CD8-positive, alpha-beta memory T cell (primary cell): ENCODE measurements at regions of chr19 and their contacts with region 1.

Region 1: GRCh38 chr19:13150187-13150930 is at the starts of genes IER2 and STX10:
- DNase-seq: peak; percentile 90 to 95 (median 91)
- H3K4me3 ChIP-seq: peak within 1 kb of the TSS; percentile 94
- H3K4me3 Mint-ChIP-seq: peak within 1 kb of the TSS; percentile 94 to 100 (median 99)
- H3K27ac ChIP-seq: peak within 1 kb of the TSS; percentile 91
- H3K27ac Mint-ChIP-seq: peak within 1 kb of the TSS; percentile 95 to 99 (median 98)
- H3K4me1 ChIP-seq: peaks cover 12% of the 10 kb centered on the region
- H3K4me1 Mint-ChIP-seq: peaks cover 26 to 42% (median 32%) of the 10 kb centered on the region in 3 donors
- H3K27me3 ChIP-seq: no peaks in the 10 kb centered on the region
- H3K27me3 Mint-ChIP-seq: peaks cover 0 to 20% of the 10 kb centered on the region in 2 donors
- total RNA-seq, gene IER2: 102 to 111 TPM
- total RNA-seq, gene STX10: 60.9 to 63.7 TPM

Region 2: GRCh38 chr19:13104360-13104847 is 46.0 kb before region 1 on chr19:
- CTCF ChIA-PET with region 1: interaction called, 5 read pairs
- POLR2A ChIA-PET with region 1: interaction called, 12 read pairs
- DNase-seq: peak; percentile 49 to 70 (median 58)
- H3K4me3 ChIP-seq: peak overlapping the region; percentile 81
- H3K4me3 Mint-ChIP-seq: peak overlapping the region; percentile 82 to 95 (median 90)
- H3K27ac ChIP-seq: peak overlapping the region; percentile 88
- H3K27ac Mint-ChIP-seq: peak overlapping the region in 7 of 8 donors; percentile 73 to 93 (median 80)
- H3K4me1 ChIP-seq: peaks cover 53% of the 10 kb centered on the region
- H3K4me1 Mint-ChIP-seq: peaks cover 28 to 52% (median 30%) of the 10 kb centered on the region in 3 donors
- H3K27me3 ChIP-seq: no peaks in the 10 kb centered on the region
- H3K27me3 Mint-ChIP-seq: peaks cover 0 to 6% of the 10 kb centered on the region in 2 donors

Region 3: DNA sequence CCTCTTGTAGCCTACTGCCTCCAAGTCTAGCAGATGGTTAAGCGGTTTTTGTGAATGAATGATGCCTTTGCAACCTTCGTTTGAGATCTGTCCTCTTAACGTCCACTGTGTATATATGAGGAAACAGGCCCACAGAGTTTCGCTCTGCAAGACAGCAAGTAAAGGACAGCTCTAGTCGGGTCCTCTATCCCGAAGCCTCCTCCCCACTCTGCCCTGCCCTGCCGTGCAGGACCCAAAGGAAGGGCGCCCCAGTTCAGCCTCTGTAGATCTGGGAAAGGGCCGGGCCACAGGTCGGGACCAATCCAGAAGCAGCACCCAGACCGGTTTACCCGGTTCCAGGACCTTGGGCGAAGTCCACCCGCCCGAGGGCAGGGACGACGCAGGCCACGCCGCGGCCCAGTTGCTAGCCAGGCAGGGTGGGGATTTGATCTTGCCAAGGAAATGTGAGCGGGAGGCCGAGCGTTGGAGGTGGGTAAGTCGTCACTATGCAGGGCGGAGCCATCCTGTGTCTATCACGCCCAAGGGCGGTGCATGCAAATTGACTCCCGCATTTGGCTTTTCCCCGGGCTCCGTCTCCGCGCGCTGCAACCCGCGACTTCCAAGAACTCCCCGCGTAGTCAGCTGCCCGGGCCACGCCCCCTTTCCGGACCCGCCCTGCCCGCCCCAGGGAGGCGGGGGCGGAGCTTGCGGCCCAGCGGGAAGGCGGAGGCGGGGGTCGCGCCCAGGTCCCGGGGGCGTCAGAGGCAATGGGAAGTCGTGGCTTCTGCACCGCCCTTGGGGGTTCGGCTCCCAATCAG is 12.4 kb after region 1 on chr19:
- CTCF ChIA-PET with region 1: interaction called, 73 read pairs
- POLR2A ChIA-PET with region 1: interaction called, 129 read pairs
- DNase-seq: peak; percentile 74 to 87 (median 79)
- H3K4me3 ChIP-seq: peak overlapping the region; percentile 82
- H3K4me3 Mint-ChIP-seq: peak overlapping the region; percentile 85 to 91 (median 89)
- H3K27ac ChIP-seq: peak overlapping the region; percentile 92
- H3K27ac Mint-ChIP-seq: peak overlapping the region; percentile 94 to 99 (median 97)
- H3K4me1 ChIP-seq: peaks cover 84% of the 10 kb centered on the region
- H3K4me1 Mint-ChIP-seq: peaks cover 53 to 87% (median 82%) of the 10 kb centered on the region in 3 donors
- H3K27me3 ChIP-seq: no peaks in the 10 kb centered on the region
- H3K27me3 Mint-ChIP-seq: peaks cover 0 to 6% of the 10 kb centered on the region in 2 donors

Region 4: DNA sequence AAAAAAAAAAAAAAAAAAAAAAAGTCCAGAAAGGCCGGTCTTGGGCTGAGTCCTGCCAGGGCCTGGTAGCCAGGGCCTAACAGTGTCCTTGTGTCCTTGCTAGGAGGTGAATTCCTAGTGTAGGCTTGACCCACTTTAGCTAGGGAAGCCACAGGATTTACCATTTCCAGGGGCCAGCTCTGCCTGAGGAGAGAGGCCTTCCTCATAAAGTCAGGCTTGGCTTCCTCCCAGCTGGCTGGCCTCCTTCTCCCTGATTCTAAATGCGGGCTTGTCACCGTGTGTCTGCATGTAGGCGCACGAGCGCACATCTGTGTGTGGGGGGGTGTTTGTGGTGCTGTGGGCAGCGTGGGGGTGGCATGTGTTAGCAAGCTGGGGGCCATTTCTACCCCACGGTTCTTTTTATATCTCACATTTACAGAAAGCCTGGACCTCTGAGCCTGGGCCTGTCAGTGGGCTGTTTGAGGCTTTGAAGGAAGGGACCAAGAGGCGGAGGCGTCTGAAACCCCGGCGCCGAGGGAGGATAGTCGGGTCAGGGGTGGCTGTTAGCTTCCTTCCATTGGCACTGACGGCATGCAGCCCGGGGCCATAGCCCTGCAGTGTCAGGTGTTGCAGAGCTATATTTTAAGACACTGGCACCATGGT is 31.5 kb after region 1 on chr19:
- CTCF ChIA-PET with region 1: interaction called, 15 read pairs
- POLR2A ChIA-PET with region 1: interaction called, 31 read pairs
- DNase-seq: peak; percentile 19 to 70 (median 35)
- H3K4me3 ChIP-seq: peak overlapping the region; percentile 41
- H3K4me3 Mint-ChIP-seq: peak overlapping the region in 6 of 7 donors; percentile 68 to 89 (median 71)
- H3K27ac ChIP-seq: no peak overlapping the region
- H3K27ac Mint-ChIP-seq: peak overlapping the region; percentile 83 to 97 (median 90)
- H3K4me1 ChIP-seq: peaks cover 26% of the 10 kb centered on the region
- H3K4me1 Mint-ChIP-seq: peaks cover 22 to 41% (median 23%) of the 10 kb centered on the region in 3 donors
- H3K27me3 ChIP-seq: no peaks in the 10 kb centered on the region
- H3K27me3 Mint-ChIP-seq: no peaks in the 10 kb centered on the region

Region 5: DNA sequence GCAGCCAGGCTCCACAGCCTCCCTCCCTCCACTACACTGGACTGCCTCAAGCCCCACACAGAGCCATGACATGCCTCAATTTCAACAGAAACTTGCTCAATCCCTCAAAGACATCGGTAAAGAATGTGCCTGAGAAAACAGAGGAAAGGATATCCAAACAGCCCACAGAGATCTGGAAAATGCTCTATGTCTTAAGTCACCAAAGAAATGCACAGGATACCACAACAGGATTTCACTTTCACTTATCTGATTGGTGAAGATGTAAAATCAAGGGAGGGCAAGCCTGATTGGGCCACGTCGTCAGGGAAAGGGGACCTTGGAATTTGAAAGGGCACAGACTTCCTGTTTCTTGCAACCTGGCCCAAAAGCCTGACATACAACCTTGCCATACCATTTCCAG is 341.8 kb after region 1 on chr19:
- CTCF ChIA-PET with region 1: no interaction called
- POLR2A ChIA-PET with region 1: no interaction called
- DNase-seq: no peak
- H3K4me3 ChIP-seq: no peak overlapping the region
- H3K4me3 Mint-ChIP-seq: no peak overlapping the region
- H3K27ac ChIP-seq: no peak overlapping the region
- H3K27ac Mint-ChIP-seq: no peak overlapping the region
- H3K4me1 ChIP-seq: no peaks in the 10 kb centered on the region
- H3K4me1 Mint-ChIP-seq: no peaks in the 10 kb centered on the region
- H3K27me3 ChIP-seq: no peaks in the 10 kb centered on the region
- H3K27me3 Mint-ChIP-seq: peaks cover 32 to 57% of the 10 kb centered on the region in 2 donors

Region 6: DNA sequence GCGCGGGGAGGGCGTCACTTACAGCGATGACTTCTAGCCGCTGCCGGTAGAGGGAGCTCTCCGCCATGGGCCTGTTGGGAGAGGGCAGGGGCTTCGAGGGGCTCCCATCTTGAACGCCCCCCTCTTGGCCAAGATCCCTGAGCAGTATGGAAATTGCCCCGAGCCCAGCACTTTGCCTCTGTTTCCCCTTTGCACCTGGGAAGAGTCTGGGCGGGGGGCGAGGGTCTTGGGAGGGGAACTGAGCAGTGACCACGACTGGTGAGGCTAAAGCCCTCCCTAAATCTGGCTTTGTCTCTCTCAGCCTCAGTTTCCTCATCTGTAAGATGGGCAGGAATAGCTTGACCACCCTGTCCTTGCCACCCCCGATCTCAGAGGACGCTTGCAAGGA is 908.7 kb after region 1 on chr19:
- CTCF ChIA-PET with region 1: no interaction called
- POLR2A ChIA-PET with region 1: interaction called, 11 read pairs
- DNase-seq: peak; percentile 33 to 62 (median 43)
- H3K4me3 ChIP-seq: no peak overlapping the region
- H3K4me3 Mint-ChIP-seq: peak overlapping the region in 6 of 7 donors; percentile 31 to 78 (median 60)
- H3K27ac ChIP-seq: no peak overlapping the region
- H3K27ac Mint-ChIP-seq: peak overlapping the region in 2 of 8 donors; percentile 21 to 42
- H3K4me1 ChIP-seq: peaks cover 17% of the 10 kb centered on the region
- H3K4me1 Mint-ChIP-seq: peaks cover 11 to 25% (median 11%) of the 10 kb centered on the region in 3 donors
- H3K27me3 ChIP-seq: peaks cover 16% of the 10 kb centered on the region
- H3K27me3 Mint-ChIP-seq: peaks cover 18 to 36% of the 10 kb centered on the region in 2 donors